ENCODE measurements at regions of chr6 and their contacts with region 1.

Region 1: GRCh38 chr6:89432875-89433251 is at the start of gene ANKRD6:
- DNase-seq: peak; percentile 65 to 80
- H3K4me3 ChIP-seq: peak within 1 kb of the TSS; percentile 42 to 79
- H3K27ac ChIP-seq: peak within 1 kb of the TSS; percentile 37 to 76
- H3K4me1 ChIP-seq: no peaks in the 10 kb centered on the region
- H3K27me3 ChIP-seq: no peaks in the 10 kb centered on the region
- CTCF ChIP-seq: peak; percentile 80 to 99 (median 98)
- POLR2A ChIP-seq: no peak
- total RNA-seq, gene ANKRD6: 6.7 to 32.6 (median 24.5) TPM

Region 2: DNA sequence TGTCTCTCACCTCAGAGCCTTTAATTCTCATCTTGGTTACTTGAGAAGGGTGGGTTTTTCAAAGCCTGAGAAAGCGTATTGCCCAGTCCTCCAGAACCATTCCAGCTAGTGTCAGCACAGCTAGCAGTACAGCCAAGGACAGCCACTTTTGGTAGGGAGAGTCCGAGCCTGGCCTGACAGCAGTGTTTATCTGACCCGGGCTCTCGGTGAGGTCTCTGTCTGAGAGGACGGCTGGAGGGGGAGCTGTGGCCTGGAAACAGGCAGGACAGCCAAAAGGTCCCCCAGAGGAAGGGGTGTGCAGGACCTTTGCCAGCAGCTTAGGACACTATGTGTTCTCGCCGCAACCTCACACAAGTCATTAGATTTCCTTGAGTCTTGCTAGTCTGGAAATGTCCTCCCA is 166.9 kb after region 1 on chr6:
- intact Hi-C with region 1: loop called (anchors 10 kb)
- DNase-seq: no peak
- H3K4me3 ChIP-seq: no peak overlapping the region
- H3K27ac ChIP-seq: no peak overlapping the region
- H3K4me1 ChIP-seq: no peaks in the 10 kb centered on the region
- H3K27me3 ChIP-seq: no peaks in the 10 kb centered on the region
- CTCF ChIP-seq: no peak
- POLR2A ChIP-seq: no peak

Measured in uterus (tissue), 4 donors.